Breast epithelium (tissue), 4 donors: ENCODE measurements at regions of chr13 and their contacts with region 1.

Region 1: GRCh38 chr13:78787190-78787589 is 128.2 kb upstream of the OBI1 start:
- DNase-seq: no peak
- H3K4me3 ChIP-seq: no peak overlapping the region
- H3K27ac ChIP-seq: no peak overlapping the region
- H3K4me1 ChIP-seq: no peaks in the 10 kb centered on the region
- H3K27me3 ChIP-seq: peaks cover 0 to 9% of the 10 kb centered on the region in 2 donors
- CTCF ChIP-seq: no peak
- POLR2A ChIP-seq: no peak

Region 2: DNA sequence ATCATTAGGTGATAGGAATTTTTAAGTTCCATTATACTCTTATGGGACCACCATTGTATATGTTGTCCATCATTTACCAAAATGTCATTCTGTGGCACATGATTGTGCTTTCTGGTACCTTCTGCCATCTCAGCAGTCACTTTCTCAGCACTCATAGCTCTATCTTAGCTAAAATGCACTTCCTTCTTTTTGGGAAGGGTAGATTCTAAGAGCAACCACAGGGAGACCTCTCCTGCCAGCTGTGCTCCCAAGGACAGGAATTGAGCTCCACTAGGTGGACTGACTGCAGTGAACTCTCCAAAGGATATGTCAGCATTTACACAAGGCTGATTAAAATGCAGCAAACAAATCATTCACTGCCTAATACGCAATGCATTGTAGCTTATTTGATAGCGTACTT is 36.5 kb before region 1 on chr13:
- intact Hi-C with region 1: no loop called
- DNase-seq: no peak
- H3K4me3 ChIP-seq: no peak overlapping the region
- H3K27ac ChIP-seq: no peak overlapping the region
- H3K4me1 ChIP-seq: no peaks in the 10 kb centered on the region
- H3K27me3 ChIP-seq: no peaks in the 10 kb centered on the region
- CTCF ChIP-seq: no peak
- POLR2A ChIP-seq: no peak

Region 3: DNA sequence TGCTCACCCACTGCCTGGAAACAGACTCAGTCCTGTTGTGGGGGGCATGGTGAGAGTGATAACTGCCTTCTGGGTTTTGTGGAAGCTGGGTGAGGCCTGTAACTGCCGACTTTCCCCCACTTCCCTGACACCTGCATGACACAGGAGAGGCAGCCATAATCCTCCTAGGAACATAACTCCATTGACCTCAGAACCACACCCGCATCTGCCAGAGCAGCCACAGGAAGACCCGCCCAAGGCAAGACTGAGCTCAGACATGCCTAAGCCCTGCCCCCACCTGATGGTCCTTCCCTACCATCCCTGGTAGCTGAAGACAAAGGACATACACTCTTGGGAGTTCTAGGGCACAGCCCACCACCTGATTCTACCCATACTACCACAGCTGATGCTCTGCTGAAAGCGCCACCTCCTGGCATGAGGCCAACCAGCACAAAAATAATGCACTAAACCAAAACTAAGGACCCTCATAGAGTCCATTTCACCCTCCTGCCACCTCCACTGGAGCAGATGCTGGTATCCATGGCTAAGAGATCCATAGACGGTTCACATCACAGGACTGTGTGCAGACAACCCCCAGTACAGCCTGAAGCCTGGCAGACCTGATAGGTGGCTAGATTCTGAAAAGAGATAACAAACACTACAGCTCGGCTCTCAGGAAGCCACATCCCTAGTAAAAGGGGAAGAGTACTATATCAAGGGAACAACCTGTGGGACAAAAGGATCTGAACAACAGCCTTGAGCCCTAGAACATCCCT is 292.3 kb after region 1 on chr13:
- intact Hi-C with region 1: loop called (anchors 10 kb)
- DNase-seq: no peak
- H3K4me3 ChIP-seq: no peak overlapping the region
- H3K27ac ChIP-seq: no peak overlapping the region
- H3K4me1 ChIP-seq: no peaks in the 10 kb centered on the region
- H3K27me3 ChIP-seq: no peaks in the 10 kb centered on the region
- CTCF ChIP-seq: no peak
- POLR2A ChIP-seq: no peak